ENCODE measurements at regions of chr1 and their contacts with region 1.

Region 1: GRCh38 chr1:244599937-244600350 is 53.0 kb upstream of the DESI2 start:
- H3K4me3 ChIP-seq: peak overlapping the region; percentile 16; the same call in 1 of the 2 replicates
- H3K27ac ChIP-seq: peak overlapping the region; percentile 1; the same call in 1 of the 2 replicates
- H3K4me1 ChIP-seq: no peaks in the 10 kb centered on the region
- CTCF ChIP-seq: no peak

Region 2: GRCh38 chr1:244614113-244614836 is 14.3 kb after region 1 on chr1:
- CTCF ChIA-PET with region 1: interaction called, 14 read pairs
- POLR2A ChIA-PET with region 1: no interaction called
- H3K4me3 ChIP-seq: no peak overlapping the region
- H3K27ac ChIP-seq: no peak overlapping the region
- H3K4me1 ChIP-seq: no peaks in the 10 kb centered on the region
- CTCF ChIP-seq: no peak

Region 3: DNA sequence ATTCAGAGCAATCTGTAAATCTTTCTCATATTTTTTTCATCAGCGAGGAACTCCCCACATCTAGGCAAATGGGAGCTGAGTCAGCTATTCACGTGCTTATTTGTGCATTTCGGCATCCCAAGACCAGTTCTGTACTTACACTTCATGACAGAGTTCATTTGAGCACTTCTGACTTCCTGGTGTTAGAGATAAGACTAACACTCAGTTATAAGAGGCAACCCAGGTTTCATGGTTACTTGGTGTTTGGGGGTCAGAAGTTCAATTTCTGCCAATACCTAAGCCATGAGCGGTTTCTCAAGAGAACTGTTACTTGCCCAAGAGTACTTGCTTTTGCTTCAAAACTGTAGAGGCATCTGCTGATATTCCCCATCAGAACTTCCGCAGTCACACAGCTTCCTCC is 28.8 kb after region 1 on chr1:
- CTCF ChIA-PET with region 1: interaction called, 18 read pairs
- POLR2A ChIA-PET with region 1: no interaction called
- H3K4me3 ChIP-seq: no peak overlapping the region
- H3K27ac ChIP-seq: no peak overlapping the region
- H3K4me1 ChIP-seq: no peaks in the 10 kb centered on the region
- CTCF ChIP-seq: no peak

Region 4: DNA sequence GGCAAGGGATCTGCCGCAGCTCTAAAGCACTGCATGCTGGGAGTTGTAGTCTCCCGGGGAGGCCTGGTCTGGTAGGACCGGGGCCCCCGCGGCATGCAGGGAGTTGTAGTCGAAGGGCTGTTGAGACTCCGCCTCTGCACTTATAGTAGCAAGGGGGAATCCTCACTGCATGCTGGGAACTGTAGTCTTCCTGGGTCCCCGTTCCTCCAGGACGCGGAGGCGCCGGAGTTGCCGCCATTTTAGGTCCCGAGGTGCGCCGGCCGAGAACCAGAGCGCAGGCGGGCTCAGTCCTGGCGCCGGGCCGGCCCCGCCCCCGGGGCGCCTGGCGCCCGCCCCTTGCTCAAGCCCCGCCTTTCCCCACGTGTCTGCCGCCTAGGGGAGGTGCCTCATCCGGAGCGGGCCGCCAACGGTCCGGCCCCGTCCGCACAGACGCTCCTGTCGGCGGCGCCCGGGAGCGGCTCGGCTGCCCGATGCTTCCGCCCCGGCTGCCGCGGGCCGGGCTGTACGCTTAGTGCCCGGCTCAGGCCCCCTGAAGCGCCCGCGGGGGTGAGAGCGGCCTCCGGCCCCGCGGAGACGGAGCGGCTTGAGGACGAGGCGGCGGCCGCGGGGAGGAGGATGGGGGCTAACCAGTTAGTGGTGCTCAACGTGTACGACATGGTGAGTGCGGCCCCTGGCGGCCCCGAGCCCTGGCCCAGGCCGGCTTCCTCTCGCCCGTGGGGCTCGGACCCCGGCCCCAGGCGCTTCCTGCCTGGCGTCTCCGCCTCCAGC is 52.9 kb after region 1 on chr1 and contains the start of gene DESI2:
- CTCF ChIA-PET with region 1: interaction called, 13 read pairs
- POLR2A ChIA-PET with region 1: no interaction called
- H3K4me3 ChIP-seq: peak within 1 kb of the TSS; percentile 60
- H3K27ac ChIP-seq: peak within 1 kb of the TSS; percentile 80
- H3K4me1 ChIP-seq: peaks cover 11% of the 10 kb centered on the region; the same call in 1 of the 2 replicates
- CTCF ChIP-seq: peak; percentile 98

Region 5: GRCh38 chr1:244792188-244792850 is 192.4 kb after region 1 on chr1:
- CTCF ChIA-PET with region 1: interaction called, 161 read pairs
- POLR2A ChIA-PET with region 1: no interaction called
- H3K4me3 ChIP-seq: no peak overlapping the region
- H3K27ac ChIP-seq: no peak overlapping the region
- H3K4me1 ChIP-seq: no peaks in the 10 kb centered on the region
- CTCF ChIP-seq: no peak

Region 6: GRCh38 chr1:244801246-244801645 is 201.3 kb after region 1 on chr1:
- CTCF ChIA-PET with region 1: interaction called, 161 read pairs
- POLR2A ChIA-PET with region 1: no interaction called
- H3K4me3 ChIP-seq: no peak overlapping the region
- H3K27ac ChIP-seq: no peak overlapping the region
- H3K4me1 ChIP-seq: no peaks in the 10 kb centered on the region
- CTCF ChIP-seq: no peak

Region 7: DNA sequence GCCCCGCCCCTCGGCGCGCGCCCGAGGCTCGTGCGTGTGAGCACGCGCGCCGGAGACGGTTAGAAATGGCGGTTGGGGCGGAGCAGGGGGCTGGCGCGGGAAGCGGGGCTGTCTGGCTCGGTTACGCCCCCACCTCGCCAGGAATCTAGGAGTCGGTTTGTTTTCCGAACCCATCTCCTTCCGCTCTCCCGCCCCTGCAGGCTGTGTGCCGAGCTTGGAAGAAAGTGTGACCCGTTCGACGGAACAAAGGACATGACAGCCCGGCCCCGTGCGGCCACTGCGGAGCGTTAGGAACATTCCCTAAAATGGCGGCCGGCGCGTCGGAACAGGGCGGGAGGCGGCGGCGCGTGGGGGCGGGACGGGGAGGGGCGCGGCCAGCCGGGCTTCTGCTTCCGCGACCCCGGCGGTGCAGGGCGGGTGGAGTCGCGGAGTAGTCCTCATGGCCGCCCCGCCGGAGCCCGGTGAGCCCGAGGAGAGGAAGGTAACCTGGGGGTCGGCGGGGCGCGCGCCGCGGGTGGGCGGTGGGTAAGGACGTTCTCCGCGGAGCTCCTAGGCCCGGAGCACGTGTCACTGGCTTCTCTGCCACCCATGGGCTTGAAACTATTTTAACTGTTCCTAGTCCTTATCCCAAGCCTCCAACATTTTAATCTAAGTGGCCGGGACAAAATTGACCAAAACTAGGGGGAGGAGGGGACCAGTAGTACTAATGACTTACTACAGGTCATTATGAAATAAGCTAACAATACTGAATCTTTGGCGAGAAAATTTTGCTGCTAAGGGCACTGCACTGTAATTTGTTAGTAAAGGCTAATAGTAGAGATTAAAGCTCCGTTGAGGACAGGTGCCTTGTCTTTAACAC is 235.6 kb after region 1 on chr1 and contains the start of gene COX20:
- CTCF ChIA-PET with region 1: interaction called, 11 read pairs
- POLR2A ChIA-PET with region 1: no interaction called
- H3K4me3 ChIP-seq: peak within 1 kb of the TSS; percentile 91
- H3K27ac ChIP-seq: peak within 1 kb of the TSS; percentile 99
- H3K4me1 ChIP-seq: peaks cover 10% of the 10 kb centered on the region; the same call in 1 of the 2 replicates
- CTCF ChIP-seq: peak; percentile 89; the same call in 1 of the 2 replicates